K562 (cell line): ENCODE measurements at regions of chr6 and their contacts with region 1.

Region 1: GRCh38 chr6:95519228-95520037 is 57.9 kb upstream of the MANEA start:
- DNase-seq: peak; percentile 53 to 97 (median 66)
- ATAC-seq: peak; percentile 96
- H3K4me3 ChIP-seq: peak overlapping the region; percentile 60
- H3K27ac ChIP-seq: peak overlapping the region; percentile 90
- H3K4me1 ChIP-seq: peaks cover 6 to 12% of the 10 kb centered on the region in 2 experiments; a peak in 4 of 5 replicates
- H3K27me3 ChIP-seq: no peaks in the 10 kb centered on the region
- CTCF ChIP-seq: no peak
- EP300 ChIP-seq: no peak
- POLR2A ChIP-seq: peak; percentile 98
- RAD21 ChIP-seq: no peak

Region 2: GRCh38 chr6:94862116-94862515 is 657.3 kb before region 1 on chr6:
- CTCF ChIA-PET with region 1: no interaction called
- POLR2A ChIA-PET with region 1: no interaction called
- in situ Hi-C with region 1: no loop called
- intact Hi-C with region 1: no loop called
- DNase-seq: no peak
- ATAC-seq: no peak
- H3K4me3 ChIP-seq: no peak overlapping the region
- H3K27ac ChIP-seq: no peak overlapping the region
- H3K4me1 ChIP-seq: no peaks in the 10 kb centered on the region
- H3K27me3 ChIP-seq: no peaks in the 10 kb centered on the region
- CTCF ChIP-seq: no peak
- EP300 ChIP-seq: no peak
- POLR2A ChIP-seq: no peak
- RAD21 ChIP-seq: no peak

Region 3: DNA sequence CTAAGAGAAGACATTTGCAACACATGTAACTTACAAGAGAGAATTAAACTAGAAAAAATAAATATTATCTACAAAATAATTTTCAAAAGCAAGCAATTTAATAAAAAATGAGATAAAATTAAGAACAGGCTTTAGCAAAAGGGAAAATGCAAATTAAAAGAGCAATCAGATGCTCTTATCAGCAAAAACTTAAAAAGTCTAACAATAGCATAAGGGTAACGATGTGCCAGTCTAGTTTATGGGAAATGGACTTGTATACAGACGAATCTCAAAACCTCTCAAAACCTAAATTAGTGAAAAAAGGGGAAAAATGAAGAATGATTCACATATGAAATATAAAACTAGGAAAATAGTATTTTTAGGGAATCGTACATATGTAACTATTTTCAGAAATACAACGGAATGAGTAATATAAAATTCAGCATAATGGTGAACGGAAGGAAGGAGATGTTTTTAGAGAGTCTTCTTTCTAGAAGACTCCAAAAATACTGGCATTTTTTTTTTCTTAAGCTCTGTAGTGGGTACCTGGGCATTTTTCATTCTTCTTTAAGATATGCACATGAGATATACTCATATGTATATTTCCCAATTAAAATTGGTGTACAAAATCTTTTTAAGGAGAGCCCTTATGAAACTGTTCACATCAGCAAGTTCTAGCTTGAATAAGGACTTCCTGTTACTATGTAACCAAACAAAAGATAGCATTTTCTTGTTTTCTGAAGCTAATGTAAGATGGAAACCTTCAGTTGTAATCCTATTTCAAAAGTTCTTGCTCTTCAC is 57.0 kb after region 1 on chr6:
- CTCF ChIA-PET with region 1: no interaction called
- POLR2A ChIA-PET with region 1: interaction called, 9 read pairs
- in situ Hi-C with region 1: no loop called
- intact Hi-C with region 1: loop called (anchors 1 kb)
- DNase-seq: peak in 1 of 4 experiments; percentile 19
- ATAC-seq: peak; percentile 15
- H3K4me3 ChIP-seq: peak overlapping the region; percentile 71
- H3K27ac ChIP-seq: peak overlapping the region; percentile 86; the same call in 2 of the 3 replicates
- H3K4me1 ChIP-seq: peaks cover 6 to 18% of the 10 kb centered on the region in 2 experiments; a peak in 4 of 5 replicates
- H3K27me3 ChIP-seq: no peaks in the 10 kb centered on the region
- CTCF ChIP-seq: no peak
- EP300 ChIP-seq: no peak
- POLR2A ChIP-seq: no peak
- RAD21 ChIP-seq: no peak

Region 4: DNA sequence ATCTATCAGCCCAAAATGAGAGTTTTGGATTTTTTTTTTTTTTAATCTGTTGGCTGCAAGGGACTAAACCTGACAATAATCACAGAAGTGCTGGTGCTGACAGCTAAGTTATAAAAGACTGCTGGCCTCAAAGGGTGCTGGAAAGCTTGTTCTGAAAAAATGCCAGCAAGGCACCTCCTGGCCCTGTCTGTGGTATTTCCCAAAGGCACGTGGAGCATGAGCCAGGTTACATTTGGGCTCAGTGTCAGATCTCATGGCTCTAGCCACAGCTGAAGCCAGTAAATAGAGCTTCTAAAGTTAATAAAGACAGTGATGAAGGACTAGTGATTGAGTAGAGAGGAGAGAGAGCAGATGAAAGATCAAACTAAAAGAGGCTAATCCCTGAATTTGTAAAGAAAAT is 675.2 kb after region 1 on chr6:
- CTCF ChIA-PET with region 1: no interaction called
- POLR2A ChIA-PET with region 1: no interaction called
- in situ Hi-C with region 1: no loop called
- intact Hi-C with region 1: no loop called
- DNase-seq: no peak
- ATAC-seq: no peak
- H3K4me3 ChIP-seq: no peak overlapping the region
- H3K27ac ChIP-seq: no peak overlapping the region
- H3K4me1 ChIP-seq: no peaks in the 10 kb centered on the region
- H3K27me3 ChIP-seq: no peaks in the 10 kb centered on the region
- CTCF ChIP-seq: no peak
- EP300 ChIP-seq: no peak
- POLR2A ChIP-seq: no peak
- RAD21 ChIP-seq: no peak

Region 5: GRCh38 chr6:96521644-96522464 is 1002.4 kb after region 1 on chr6 and contains the start of gene UFL1:
- CTCF ChIA-PET with region 1: no interaction called
- POLR2A ChIA-PET with region 1: no interaction called
- in situ Hi-C with region 1: no loop called
- intact Hi-C with region 1: loop called (anchors 5 kb)
- DNase-seq: peak; percentile 78 to 96 (median 82)
- ATAC-seq: peak; percentile 95
- H3K4me3 ChIP-seq: peak within 1 kb of the TSS; percentile 87
- H3K27ac ChIP-seq: peak within 1 kb of the TSS; percentile 97
- H3K4me1 ChIP-seq: peaks cover 2 to 3% of the 10 kb centered on the region in 2 experiments; a peak in 3 of 5 replicates
- H3K27me3 ChIP-seq: no peaks in the 10 kb centered on the region
- CTCF ChIP-seq: 0 out of 6 replicates have a peak, but pooled peaks of 1 of the 3 experiments have one; percentile 6
- EP300 ChIP-seq: peak; percentile 15
- POLR2A ChIP-seq: peak; percentile 97
- RAD21 ChIP-seq: no peak
- polyA plus RNA-seq, gene UFL1: 21.3 to 23.1 TPM